Posterior vena cava (tissue), 2 donors: ENCODE measurements at regions of chr3 and their contacts with region 1.

Region 1: DNA sequence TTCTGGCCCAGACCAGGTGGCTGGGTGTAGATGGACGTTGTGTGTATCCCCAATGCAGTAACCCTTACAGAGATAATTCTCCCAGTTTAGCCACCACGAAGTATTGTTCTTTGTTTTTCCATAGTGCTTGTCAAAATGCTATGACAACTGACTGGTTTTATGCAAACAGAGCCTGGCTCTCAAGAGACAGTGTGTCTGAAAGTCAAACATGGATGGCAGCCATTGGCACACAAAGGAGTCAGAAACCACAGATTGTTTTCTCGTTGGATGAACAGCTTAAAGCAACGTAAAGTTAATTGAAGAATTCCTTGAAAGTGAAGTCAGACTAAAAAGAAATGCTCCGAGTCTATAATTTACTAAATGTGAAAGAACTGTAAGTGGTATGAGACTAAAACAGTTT is 91.2 kb downstream of the FILIP1L start:
- DNase-seq: no peak

Region 2: GRCh38 chr3:99965077-99965476 is 58.1 kb before region 1 on chr3:
- intact Hi-C with region 1: loop called in 1 of 2 experiments (anchors 10 kb)
- DNase-seq: no peak

Region 3: GRCh38 chr3:101962055-101962454 is 1938.9 kb after region 1 on chr3:
- intact Hi-C with region 1: no loop called
- DNase-seq: no peak